PC-3 (cell line): ENCODE measurements at regions of chr3 and their contacts with region 1.

Region 1: GRCh38 chr3:157487339-157487738 is 15.9 kb downstream of the VEPH1 start:
- DNase-seq: no peak
- ATAC-seq: no peak
- H3K4me3 ChIP-seq: no peak overlapping the region
- H3K27ac ChIP-seq: no peak overlapping the region
- H3K4me1 ChIP-seq: no peaks in the 10 kb centered on the region; the same call in 1 of the 2 replicates
- H3K27me3 ChIP-seq: no peaks in the 10 kb centered on the region
- CTCF ChIP-seq: no peak

Region 2: DNA sequence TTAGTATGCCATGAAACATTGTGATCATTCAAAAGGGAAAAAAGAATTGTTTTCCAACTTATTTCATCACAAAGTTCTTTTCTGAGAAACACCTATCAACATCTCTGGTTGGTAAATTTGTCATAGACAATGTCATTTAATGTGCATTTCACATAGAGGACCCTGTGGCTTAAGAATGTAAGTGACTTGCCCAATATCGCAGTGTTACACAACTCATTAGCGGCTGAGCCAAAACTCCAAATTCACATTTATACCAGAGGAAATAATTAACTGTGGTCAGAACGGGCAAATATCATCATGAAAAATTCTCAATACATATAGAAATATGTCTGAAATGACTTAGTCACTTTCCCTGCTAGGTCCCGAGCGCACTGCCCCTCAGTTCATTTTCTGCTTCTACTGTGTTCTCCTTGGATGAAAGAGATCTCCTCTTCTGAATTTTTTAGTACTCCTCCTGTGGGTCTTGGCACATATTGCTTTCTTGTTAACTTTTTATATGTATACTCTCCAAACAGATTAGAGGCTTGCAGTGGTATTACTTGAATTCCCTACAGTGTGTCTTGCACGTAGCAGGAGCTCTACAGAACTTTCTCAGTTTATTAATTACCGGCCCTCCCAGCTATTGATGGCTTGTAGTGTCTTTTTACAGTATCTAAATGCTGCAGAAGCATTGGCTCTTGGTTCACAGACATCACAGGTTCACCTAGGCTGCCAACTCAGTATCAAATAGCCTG is 17.6 kb before region 1 on chr3:
- CTCF ChIA-PET with region 1: no interaction called
- POLR2A ChIA-PET with region 1: no interaction called
- intact Hi-C with region 1: loop called (anchors 2 kb)
- DNase-seq: peak; percentile 23
- ATAC-seq: peak; percentile 80
- H3K4me3 ChIP-seq: no peak overlapping the region
- H3K27ac ChIP-seq: 0 out of 2 replicates have a peak overlapping the region, but pooled peaks have one; percentile 7
- H3K4me1 ChIP-seq: peaks cover 30% of the 10 kb centered on the region
- H3K27me3 ChIP-seq: no peaks in the 10 kb centered on the region
- CTCF ChIP-seq: no peak

Region 3: DNA sequence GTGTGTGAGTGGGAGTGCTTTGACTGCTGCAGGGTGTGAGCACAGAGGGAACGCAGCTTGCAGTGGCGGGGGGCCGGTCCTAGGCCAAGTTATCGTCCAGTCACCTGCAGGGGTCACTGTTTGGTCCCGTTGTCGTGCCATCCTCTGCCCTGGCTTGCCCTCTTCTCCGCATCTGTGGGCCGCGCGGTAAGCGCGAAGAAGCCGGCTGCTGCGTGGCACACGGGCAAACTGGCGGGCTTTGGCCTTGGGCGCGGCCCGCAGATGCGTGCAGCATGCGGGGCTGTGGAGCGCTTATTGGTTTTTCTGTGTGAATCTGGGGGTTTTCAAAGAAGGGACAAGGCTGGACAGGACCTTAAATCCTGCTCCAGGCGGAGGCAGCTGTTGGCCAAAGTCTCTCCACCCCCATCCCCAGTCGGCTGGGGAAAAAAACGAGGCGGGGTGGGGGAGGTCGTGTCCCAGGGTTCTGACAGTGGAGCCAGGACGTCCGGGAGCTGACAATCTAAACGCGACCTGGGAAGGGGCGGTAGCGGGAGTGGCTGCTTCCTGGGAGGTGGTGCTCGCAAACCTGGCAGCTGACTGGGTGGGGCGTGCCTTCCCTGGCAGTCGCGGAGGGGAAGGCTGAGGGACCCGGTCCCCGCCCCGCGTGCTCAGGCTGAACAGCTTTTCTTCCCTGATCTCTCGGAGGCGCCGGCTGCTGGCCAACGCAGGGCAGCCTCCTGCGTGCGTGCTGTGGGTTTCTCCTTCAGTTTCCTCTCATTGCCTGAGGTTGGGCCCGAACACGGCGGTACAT is 55.6 kb after region 1 on chr3:
- CTCF ChIA-PET with region 1: no interaction called
- POLR2A ChIA-PET with region 1: no interaction called
- intact Hi-C with region 1: no loop called
- DNase-seq: peak; percentile 85
- ATAC-seq: peak; percentile 96
- H3K4me3 ChIP-seq: peak overlapping the region; percentile 74
- H3K27ac ChIP-seq: no peak overlapping the region
- H3K4me1 ChIP-seq: 0 out of 2 replicates have a peak, but pooled peaks cover 4% of the 10 kb centered on the region
- H3K27me3 ChIP-seq: no peaks in the 10 kb centered on the region
- CTCF ChIP-seq: peak; percentile 45; the same call in 1 of the 2 replicates